GM12878 (cell line): ENCODE measurements at regions of chr22 and their contacts with region 1.

Region 1: DNA sequence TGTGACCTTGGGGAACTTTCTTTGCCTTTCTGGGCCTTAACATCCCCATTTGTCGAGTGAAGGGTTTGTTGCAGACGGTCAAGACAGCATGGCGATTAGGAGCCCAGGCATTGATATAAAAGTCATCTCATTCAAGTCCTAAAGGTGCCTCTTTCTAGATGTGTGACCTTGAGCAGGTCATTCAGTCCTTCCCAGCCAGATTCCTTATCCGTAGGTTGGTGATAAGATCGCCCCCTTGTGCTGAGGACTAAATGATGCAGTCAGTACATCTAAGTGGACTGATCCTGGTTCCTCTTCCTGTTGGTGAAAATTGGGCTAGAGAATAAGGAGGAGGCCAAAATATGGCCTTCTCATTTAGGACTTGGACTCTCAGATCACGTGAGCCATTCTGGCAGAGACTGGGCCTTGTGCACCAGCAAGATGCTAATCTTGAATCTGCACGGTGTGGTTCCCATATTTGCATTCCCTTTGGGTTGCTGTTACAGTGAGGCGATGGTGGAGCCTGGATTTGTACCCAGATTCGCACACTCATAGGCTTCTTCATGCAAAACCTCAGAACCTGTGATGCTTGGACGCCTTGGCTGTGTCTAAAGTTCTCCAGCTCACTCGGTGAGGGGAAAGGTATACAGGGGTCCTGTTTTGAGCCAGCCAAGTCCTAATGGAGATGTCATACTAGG is 156.8 kb downstream of the MYO18B start:
- DNase-seq: no peak
- ATAC-seq: no peak
- H3K4me3 ChIP-seq: no peak overlapping the region
- H3K27ac ChIP-seq: no peak overlapping the region
- H3K4me1 ChIP-seq: no peaks in the 10 kb centered on the region
- H3K27me3 ChIP-seq: no peaks in the 10 kb centered on the region; a peak in 1 of 4 replicates
- CTCF ChIP-seq: peak; percentile 29 to 45 (median 34); a peak in 3 of 6 replicates
- EP300 ChIP-seq: no peak
- POLR2A ChIP-seq: no peak
- RAD21 ChIP-seq: peak; percentile 25; the same call in 1 of the 2 replicates

Region 2: DNA sequence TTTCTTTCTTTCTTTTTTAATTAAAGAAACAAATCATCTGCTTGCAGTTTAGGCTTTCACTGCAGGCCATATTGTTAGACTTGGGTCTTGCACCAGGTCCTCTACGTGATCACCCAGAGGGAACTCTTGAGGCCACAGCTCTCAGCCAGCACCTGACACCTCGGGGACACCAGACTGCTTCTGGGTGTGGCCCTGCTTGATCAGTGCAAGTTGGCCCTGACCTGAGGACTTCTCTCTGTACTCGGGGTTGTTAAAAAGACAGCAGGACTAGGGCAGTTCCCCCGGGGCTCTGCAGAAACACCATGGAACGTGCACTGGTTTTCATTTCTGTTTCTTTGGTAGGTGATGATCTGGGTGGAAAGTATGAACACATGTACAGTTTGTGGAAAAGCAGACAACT is 208.0 kb before region 1 on chr22:
- CTCF ChIA-PET with region 1: no interaction called
- POLR2A ChIA-PET with region 1: no interaction called
- RAD21 ChIA-PET with region 1: no interaction called
- SMC1A ChIA-PET with region 1: no interaction called
- in situ Hi-C with region 1: no loop called
- intact Hi-C with region 1: no loop called
- DNase-seq: no peak
- ATAC-seq: no peak
- H3K4me3 ChIP-seq: no peak overlapping the region
- H3K27ac ChIP-seq: no peak overlapping the region
- H3K4me1 ChIP-seq: no peaks in the 10 kb centered on the region
- H3K27me3 ChIP-seq: no peaks in the 10 kb centered on the region
- CTCF ChIP-seq: no peak
- EP300 ChIP-seq: no peak
- POLR2A ChIP-seq: no peak
- RAD21 ChIP-seq: no peak

Region 3: DNA sequence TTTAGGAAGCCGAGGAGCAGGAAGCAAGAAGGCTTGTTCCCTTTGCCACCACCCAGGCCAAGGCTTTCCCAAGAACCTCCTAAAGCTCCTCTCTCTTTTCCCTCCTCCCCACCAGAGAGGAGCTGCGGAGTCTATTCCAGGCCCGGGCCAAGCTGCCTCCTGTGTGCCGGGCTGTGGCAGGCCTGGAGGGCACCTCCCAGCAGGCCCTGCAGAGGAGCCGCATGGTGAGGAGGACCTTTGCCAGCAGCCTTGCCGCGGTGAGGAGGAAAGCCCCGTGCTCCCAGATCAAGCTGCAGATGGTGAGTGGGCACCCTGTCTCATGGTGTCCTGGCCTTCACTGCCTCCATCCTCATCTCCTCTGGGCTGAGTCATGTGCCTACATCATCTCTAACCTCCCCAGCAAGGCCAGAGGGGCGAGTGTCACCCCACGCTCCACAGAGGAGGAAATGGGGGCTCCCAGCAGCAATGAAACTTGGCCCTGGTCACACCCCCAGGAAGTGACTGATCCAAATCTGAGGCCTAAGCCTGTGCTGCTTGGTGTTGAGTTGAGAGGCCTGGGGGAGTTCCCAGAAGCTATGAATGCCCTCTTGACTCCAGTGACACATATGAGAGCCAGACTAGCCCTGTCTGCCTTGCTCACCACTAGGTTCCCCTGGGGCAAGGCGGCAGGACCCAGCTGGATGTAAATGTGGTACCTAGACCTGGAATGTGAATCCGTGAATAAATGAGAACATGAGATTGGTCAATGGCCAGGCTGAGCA is 52.7 kb before region 1 on chr22:
- CTCF ChIA-PET with region 1: no interaction called
- POLR2A ChIA-PET with region 1: no interaction called
- RAD21 ChIA-PET with region 1: no interaction called
- SMC1A ChIA-PET with region 1: no interaction called
- in situ Hi-C with region 1: no loop called
- intact Hi-C with region 1: no loop called
- DNase-seq: no peak
- ATAC-seq: peak; percentile 90
- H3K4me3 ChIP-seq: no peak overlapping the region
- H3K27ac ChIP-seq: no peak overlapping the region
- H3K4me1 ChIP-seq: peaks cover 7% of the 10 kb centered on the region
- H3K27me3 ChIP-seq: no peaks in the 10 kb centered on the region
- CTCF ChIP-seq: no peak
- EP300 ChIP-seq: no peak
- POLR2A ChIP-seq: no peak
- RAD21 ChIP-seq: no peak

Region 4: GRCh38 chr22:25880524-25880923 is 18.3 kb before region 1 on chr22:
- CTCF ChIA-PET with region 1: interaction called, 11 read pairs
- POLR2A ChIA-PET with region 1: no interaction called
- RAD21 ChIA-PET with region 1: no interaction called
- SMC1A ChIA-PET with region 1: no interaction called
- in situ Hi-C with region 1: no loop called
- intact Hi-C with region 1: no loop called
- DNase-seq: peak; percentile 11
- ATAC-seq: peak; percentile 78
- H3K4me3 ChIP-seq: no peak overlapping the region
- H3K27ac ChIP-seq: no peak overlapping the region
- H3K4me1 ChIP-seq: no peaks in the 10 kb centered on the region
- H3K27me3 ChIP-seq: no peaks in the 10 kb centered on the region; a peak in 2 of 4 replicates
- CTCF ChIP-seq: peak; percentile 46 to 74 (median 60); a peak in 5 of 6 replicates
- EP300 ChIP-seq: no peak
- POLR2A ChIP-seq: no peak
- RAD21 ChIP-seq: peak; percentile 73